Caco-2 (cell line): ENCODE measurements at regions of chr2 and their contacts with region 1.

Region 1: GRCh38 chr2:19863303-19864041 is 38.3 kb downstream of the TTC32 start:
- DNase-seq: peak; percentile 66 to 85
- H3K4me3 ChIP-seq: no peak overlapping the region
- H3K4me3 Mint-ChIP-seq: no peak overlapping the region
- H3K27ac Mint-ChIP-seq: no peak overlapping the region
- H3K4me1 ChIP-seq: no peaks in the 10 kb centered on the region
- H3K4me1 Mint-ChIP-seq: no peaks in the 10 kb centered on the region
- H3K27me3 ChIP-seq: no peaks in the 10 kb centered on the region
- H3K27me3 Mint-ChIP-seq: no peaks in the 10 kb centered on the region
- CTCF ChIP-seq: peak; percentile 90 to 99

Region 2: DNA sequence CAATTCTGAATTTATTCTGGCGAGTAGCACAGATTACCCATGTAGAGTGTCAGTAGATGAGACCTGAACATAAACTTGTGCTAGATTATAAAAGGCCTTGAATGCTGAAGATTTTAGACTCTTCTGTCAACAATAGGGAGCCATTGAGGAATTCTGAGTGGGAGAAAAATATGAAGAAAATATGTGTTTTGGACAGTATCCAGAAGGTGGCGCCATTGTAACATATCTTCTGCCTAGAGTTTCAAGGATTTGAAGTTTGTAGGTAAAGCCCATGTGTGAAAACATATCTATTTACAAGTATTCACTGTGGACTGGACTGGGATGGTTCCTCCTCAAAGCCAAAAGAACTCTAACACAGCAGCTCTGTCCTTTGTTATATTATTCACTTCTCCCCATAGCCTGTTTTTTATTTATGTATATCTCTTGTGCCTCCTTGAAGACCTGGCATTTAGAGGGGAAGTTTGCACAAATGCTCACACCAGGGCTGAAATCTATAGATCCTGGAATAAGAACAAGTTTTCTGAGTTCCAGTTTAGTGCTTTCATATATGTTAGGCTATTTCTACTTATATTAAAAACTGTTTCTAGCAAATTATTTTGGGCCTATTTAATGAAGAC is 1427.9 kb before region 1 on chr2:
- CTCF ChIA-PET with region 1: no interaction called
- POLR2A ChIA-PET with region 1: no interaction called
- intact Hi-C with region 1: loop called (anchors 10 kb)
- DNase-seq: peak in 1 of 2 experiments; percentile 58
- H3K4me3 ChIP-seq: no peak overlapping the region
- H3K4me3 Mint-ChIP-seq: no peak overlapping the region
- H3K27ac Mint-ChIP-seq: no peak overlapping the region
- H3K4me1 ChIP-seq: no peaks in the 10 kb centered on the region
- H3K4me1 Mint-ChIP-seq: no peaks in the 10 kb centered on the region
- H3K27me3 ChIP-seq: no peaks in the 10 kb centered on the region; the same call in 1 of the 2 replicates
- H3K27me3 Mint-ChIP-seq: peaks cover 14% of the 10 kb centered on the region
- CTCF ChIP-seq: peak; percentile 63 to 66

Region 3: GRCh38 chr2:18749912-18750526 is 1113.5 kb before region 1 on chr2:
- CTCF ChIA-PET with region 1: no interaction called
- POLR2A ChIA-PET with region 1: no interaction called
- intact Hi-C with region 1: loop called (anchors 1 kb)
- DNase-seq: peak in 1 of 2 experiments; percentile 69
- H3K4me3 ChIP-seq: no peak overlapping the region
- H3K4me3 Mint-ChIP-seq: no peak overlapping the region
- H3K27ac Mint-ChIP-seq: no peak overlapping the region
- H3K4me1 ChIP-seq: no peaks in the 10 kb centered on the region
- H3K4me1 Mint-ChIP-seq: no peaks in the 10 kb centered on the region
- H3K27me3 ChIP-seq: no peaks in the 10 kb centered on the region
- H3K27me3 Mint-ChIP-seq: peaks cover 8% of the 10 kb centered on the region
- CTCF ChIP-seq: peak; percentile 73 to 84

Region 4: DNA sequence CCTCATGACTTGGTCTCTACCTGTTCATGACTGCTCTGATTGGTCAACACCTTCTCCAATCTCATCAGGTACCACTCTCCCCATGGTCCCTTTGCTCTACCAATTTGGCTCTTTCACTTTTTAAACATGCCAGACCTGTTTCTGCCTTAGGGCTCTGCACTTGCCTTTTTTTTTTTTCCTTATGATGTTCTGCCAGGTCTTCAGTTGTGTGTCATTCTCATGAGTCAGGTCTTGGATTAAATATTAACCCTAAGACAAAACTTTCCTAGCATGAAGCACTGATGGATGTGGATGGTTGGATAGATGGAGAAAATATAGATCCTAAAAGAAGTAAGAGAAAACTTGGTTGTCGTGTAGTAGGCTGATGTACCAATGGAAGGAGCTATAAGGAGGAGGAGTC is 181.0 kb before region 1 on chr2:
- CTCF ChIA-PET with region 1: no interaction called
- POLR2A ChIA-PET with region 1: no interaction called
- intact Hi-C with region 1: loop called (anchors 10 kb)
- DNase-seq: peak in 1 of 2 experiments; percentile 29
- H3K4me3 ChIP-seq: no peak overlapping the region
- H3K4me3 Mint-ChIP-seq: no peak overlapping the region
- H3K27ac Mint-ChIP-seq: no peak overlapping the region
- H3K4me1 ChIP-seq: peaks cover 6% of the 10 kb centered on the region; the same call in 1 of the 2 replicates
- H3K4me1 Mint-ChIP-seq: no peaks in the 10 kb centered on the region
- H3K27me3 ChIP-seq: no peaks in the 10 kb centered on the region
- H3K27me3 Mint-ChIP-seq: peaks cover 3% of the 10 kb centered on the region
- CTCF ChIP-seq: no peak

Region 5: DNA sequence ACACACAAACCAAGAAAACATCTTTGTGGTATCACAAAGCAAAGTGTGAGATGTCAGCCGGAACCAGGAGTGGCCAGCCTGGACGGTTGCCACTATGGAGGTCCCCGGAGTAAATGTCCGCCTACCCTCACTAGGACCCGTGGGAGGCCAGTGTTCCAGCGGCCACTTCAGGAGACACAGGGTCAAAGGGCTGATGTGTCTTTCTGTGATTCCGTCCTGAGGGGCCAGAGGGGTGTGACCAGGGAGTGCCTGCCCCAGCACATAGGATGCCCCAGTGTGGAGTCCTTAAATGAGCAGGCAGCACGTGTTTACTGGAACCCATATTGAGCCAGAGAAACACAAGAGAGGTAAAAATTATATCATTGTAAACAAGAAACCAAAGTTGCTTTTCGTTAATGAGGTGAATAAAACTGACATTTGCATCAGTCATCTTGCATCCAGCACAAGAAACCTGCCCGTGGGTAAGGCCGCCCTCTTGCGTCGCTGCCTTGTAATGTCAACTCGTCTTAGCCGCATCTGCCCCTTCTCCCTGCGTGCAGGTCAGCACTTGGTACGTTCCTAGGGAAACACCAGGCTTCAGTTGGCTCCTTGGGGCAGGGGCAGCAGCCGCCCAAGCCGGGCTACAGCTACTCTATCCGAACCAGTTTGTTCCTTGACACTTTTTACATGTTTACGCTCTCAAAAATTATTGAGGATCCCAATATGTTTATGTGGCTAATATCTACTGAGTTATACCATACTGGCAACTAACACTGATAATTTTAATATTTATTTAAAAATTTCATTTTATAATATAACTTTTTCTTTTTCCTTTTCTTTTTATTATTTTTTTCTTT is 234.6 kb after region 1 on chr2:
- CTCF ChIA-PET with region 1: no interaction called
- POLR2A ChIA-PET with region 1: no interaction called
- intact Hi-C with region 1: loop called (anchors 10 kb)
- DNase-seq: peak; percentile 89
- H3K4me3 ChIP-seq: no peak overlapping the region
- H3K4me3 Mint-ChIP-seq: no peak overlapping the region
- H3K27ac Mint-ChIP-seq: no peak overlapping the region
- H3K4me1 ChIP-seq: peaks cover 5% of the 10 kb centered on the region
- H3K4me1 Mint-ChIP-seq: peaks cover 8% of the 10 kb centered on the region
- H3K27me3 ChIP-seq: no peaks in the 10 kb centered on the region
- H3K27me3 Mint-ChIP-seq: no peaks in the 10 kb centered on the region
- CTCF ChIP-seq: peak; percentile 93